Activated B cell treated with CpG ODN at 0.5 μM for 24 hours (primary cell): ENCODE measurements at regions of chr6 and their contacts with region 1.

Region 1: GRCh38 chr6:157461000-157461915 is 80.3 kb downstream of the ZDHHC14 start:
- DNase-seq: peak; percentile 64
- ATAC-seq: peak; percentile 65
- H3K4me3 Mint-ChIP-seq: peak overlapping the region; percentile 67
- H3K27ac Mint-ChIP-seq: peak overlapping the region; percentile 95
- H3K4me1 Mint-ChIP-seq: peaks cover 81% of the 10 kb centered on the region
- H3K27me3 Mint-ChIP-seq: no peaks in the 10 kb centered on the region
- CTCF ChIP-seq: no peak

Region 2: DNA sequence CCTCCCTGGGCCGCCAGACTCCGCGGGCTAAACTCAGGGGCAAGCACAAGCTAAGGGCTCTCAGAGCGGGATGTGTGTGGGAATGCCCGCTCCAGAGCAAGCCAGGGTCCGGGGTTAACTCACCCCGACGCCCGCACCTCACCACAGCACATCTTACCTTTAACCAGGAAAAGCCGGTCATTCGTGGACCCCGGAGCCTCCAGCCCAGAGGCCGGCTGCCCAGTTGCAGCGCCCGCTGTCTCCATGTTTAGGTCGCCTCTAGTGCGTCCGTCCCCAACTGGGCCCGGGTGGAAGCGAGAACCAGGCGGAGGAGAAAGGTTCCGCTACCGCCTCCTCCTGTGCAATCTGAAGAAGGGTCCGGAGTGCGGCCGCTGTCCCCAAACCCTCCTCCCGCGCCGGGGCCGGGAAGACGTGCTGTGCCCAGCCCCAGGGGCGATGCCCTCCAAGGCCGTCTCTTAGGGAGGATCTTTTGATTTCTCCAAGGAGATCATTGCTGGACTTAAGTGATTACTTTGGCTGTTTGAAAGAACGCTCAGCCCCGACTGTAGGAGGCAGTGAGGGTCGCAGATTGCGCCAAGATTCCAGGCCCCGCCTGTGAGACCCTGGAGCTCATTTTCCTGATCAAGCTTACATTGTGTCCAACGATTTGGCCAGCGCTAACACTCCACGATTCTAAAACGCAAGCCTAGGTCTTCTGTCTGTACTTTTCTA is 137.8 kb before region 1 on chr6 and contains the start of gene TMEM242:
- CTCF ChIA-PET with region 1: no interaction called
- POLR2A ChIA-PET with region 1: interaction called, 23 read pairs
- intact Hi-C with region 1: loop called (anchors 1 kb)
- DNase-seq: peak; percentile 90
- ATAC-seq: peak; percentile 94
- H3K4me3 Mint-ChIP-seq: peak within 1 kb of the TSS; percentile 96
- H3K27ac Mint-ChIP-seq: peak within 1 kb of the TSS; percentile 92
- H3K4me1 Mint-ChIP-seq: peaks cover 19% of the 10 kb centered on the region
- H3K27me3 Mint-ChIP-seq: peaks cover 16% of the 10 kb centered on the region
- CTCF ChIP-seq: no peak
- total RNA-seq, gene TMEM242: 16.1 and 17.6 TPM in 2 replicates

Region 3: DNA sequence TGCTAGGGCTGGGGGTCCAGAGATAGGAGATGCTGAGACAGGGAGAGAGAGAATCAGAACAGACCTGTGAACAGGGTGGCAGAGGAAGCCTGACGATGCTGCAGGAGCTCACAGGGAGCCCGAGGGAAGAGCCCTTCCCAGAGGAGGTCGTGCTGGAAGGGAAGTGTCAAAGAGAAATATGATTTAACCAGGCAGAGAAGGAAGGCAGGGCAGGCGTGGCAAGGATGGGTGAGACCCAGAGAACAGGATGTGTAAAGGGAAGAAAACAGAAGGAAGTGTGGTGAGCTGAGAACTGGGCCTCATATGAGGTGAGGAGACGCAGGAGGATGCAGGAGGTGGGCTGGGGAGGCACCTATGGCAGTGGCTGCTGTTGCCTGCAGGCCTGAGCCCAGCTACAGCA is 25.3 kb after region 1 on chr6:
- CTCF ChIA-PET with region 1: interaction called, 4 read pairs
- POLR2A ChIA-PET with region 1: interaction called, 11 read pairs
- intact Hi-C with region 1: no loop called
- DNase-seq: no peak
- ATAC-seq: peak; percentile 57
- H3K4me3 Mint-ChIP-seq: peak overlapping the region; percentile 12
- H3K27ac Mint-ChIP-seq: peak overlapping the region; percentile 72
- H3K4me1 Mint-ChIP-seq: peaks cover 50% of the 10 kb centered on the region
- H3K27me3 Mint-ChIP-seq: no peaks in the 10 kb centered on the region
- CTCF ChIP-seq: no peak

Region 4: GRCh38 chr6:157571269-157571668 is 110.0 kb after region 1 on chr6:
- CTCF ChIA-PET with region 1: no interaction called
- POLR2A ChIA-PET with region 1: interaction called, 15 read pairs
- intact Hi-C with region 1: no loop called
- DNase-seq: no peak
- ATAC-seq: no peak
- H3K4me3 Mint-ChIP-seq: no peak overlapping the region
- H3K27ac Mint-ChIP-seq: peak overlapping the region; percentile 53
- H3K4me1 Mint-ChIP-seq: peaks cover 51% of the 10 kb centered on the region
- H3K27me3 Mint-ChIP-seq: no peaks in the 10 kb centered on the region
- CTCF ChIP-seq: no peak

Region 5: DNA sequence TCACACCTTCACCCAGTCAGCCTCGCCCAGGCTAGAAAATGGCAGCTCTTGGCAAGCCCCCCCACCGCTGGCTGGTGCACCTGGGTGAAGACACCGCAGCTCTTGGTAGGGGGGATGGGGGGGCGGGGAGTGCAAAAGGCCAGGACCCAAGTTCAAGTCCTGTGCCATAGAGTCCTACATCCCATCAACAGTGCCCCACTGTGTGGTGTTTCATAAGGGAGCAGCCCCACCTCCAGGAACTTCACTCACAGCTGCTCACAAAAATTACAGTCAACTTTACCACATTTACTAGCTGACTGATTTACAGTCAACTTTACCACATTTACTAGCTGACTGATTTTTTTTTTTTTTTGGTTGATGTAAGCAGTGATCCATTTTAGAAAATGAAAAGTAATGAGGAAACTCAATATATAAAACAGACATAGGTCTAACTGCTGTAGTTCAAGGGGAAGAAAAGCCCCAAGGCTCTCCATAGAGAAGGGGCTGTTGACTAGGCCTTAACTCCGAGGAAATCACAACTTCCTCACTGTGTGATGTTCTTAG is 152.8 kb after region 1 on chr6:
- CTCF ChIA-PET with region 1: interaction called, 5 read pairs
- POLR2A ChIA-PET with region 1: interaction called, 15 read pairs
- intact Hi-C with region 1: loop called (anchors 2 kb)
- DNase-seq: no peak
- ATAC-seq: peak; percentile 74
- H3K4me3 Mint-ChIP-seq: peak overlapping the region; percentile 41
- H3K27ac Mint-ChIP-seq: peak overlapping the region; percentile 85
- H3K4me1 Mint-ChIP-seq: peaks cover 67% of the 10 kb centered on the region
- H3K27me3 Mint-ChIP-seq: no peaks in the 10 kb centered on the region
- CTCF ChIP-seq: no peak

Region 6: DNA sequence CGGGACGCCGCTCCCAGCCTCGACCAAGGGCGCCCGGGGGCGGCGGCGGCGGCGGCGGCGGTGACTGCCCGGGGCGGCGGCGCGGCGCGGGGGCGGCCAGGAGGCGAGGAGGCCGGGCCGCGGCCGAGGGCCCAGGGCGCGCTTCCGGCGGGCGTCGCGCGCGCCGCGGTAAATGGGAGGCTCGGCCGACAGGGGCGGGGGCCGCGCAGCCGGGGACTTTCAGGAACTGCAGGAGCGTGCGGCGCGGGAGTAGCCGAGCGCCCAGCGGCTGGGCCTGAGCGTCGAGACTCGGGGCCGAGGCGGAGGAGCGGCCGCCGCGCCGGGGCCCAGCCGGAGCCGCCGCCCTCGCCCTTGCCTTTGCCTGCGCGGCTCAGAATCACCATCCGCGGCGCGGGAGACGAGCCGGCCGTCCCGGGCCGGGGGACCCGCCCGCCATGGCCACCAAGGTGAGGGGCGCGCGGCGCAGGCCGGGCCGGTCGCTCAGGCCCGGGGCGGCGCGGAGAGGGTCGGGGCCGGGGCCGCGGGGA is 361.8 kb after region 1 on chr6 and contains the start of gene SNX9:
- CTCF ChIA-PET with region 1: no interaction called
- POLR2A ChIA-PET with region 1: no interaction called
- intact Hi-C with region 1: loop called (anchors 10 kb)
- DNase-seq: peak; percentile 70
- ATAC-seq: peak; percentile 65
- H3K4me3 Mint-ChIP-seq: peak within 1 kb of the TSS; percentile 95
- H3K27ac Mint-ChIP-seq: peak within 1 kb of the TSS; percentile 98
- H3K4me1 Mint-ChIP-seq: peaks cover 47% of the 10 kb centered on the region
- H3K27me3 Mint-ChIP-seq: no peaks in the 10 kb centered on the region
- CTCF ChIP-seq: no peak
- total RNA-seq, gene SNX9: 38.8 and 40.0 TPM in 2 replicates